Activated T-helper 1 cell treated with anti-CD3 and anti-CD28 coated beads, Interleukin-12 subunit alpha, Interleukin-12 subunit beta, Interleukin-2, Interleukin-4 antibody, amounts not matched to agents 30 ng/mL and 10 ng/mL and 1 ng/mL, durations not matched to agents 14 hours and 24 hours and 36 hours (primary cell): ENCODE measurements at regions of chr2 and their contacts with region 1.

Region 1: GRCh38 chr2:178069551-178069950 is 3.0 kb downstream of the PDE11A start:
- DNase-seq: no peak
- H3K4me3 Mint-ChIP-seq: no peak overlapping the region
- H3K27ac Mint-ChIP-seq: no peak overlapping the region
- H3K4me1 Mint-ChIP-seq: peaks cover 10% of the 10 kb centered on the region
- H3K27me3 Mint-ChIP-seq: peaks cover 53% of the 10 kb centered on the region

Region 2: GRCh38 chr2:178018141-178018540 is 51.4 kb before region 1 on chr2:
- intact Hi-C with region 1: loop called (anchors 1 kb)
- DNase-seq: no peak
- H3K4me3 Mint-ChIP-seq: no peak overlapping the region
- H3K27ac Mint-ChIP-seq: no peak overlapping the region
- H3K4me1 Mint-ChIP-seq: no peaks in the 10 kb centered on the region
- H3K27me3 Mint-ChIP-seq: no peaks in the 10 kb centered on the region